CD4-positive, alpha-beta T cell (primary cell): ENCODE measurements at regions of chr7 and their contacts with region 1.

Region 1: DNA sequence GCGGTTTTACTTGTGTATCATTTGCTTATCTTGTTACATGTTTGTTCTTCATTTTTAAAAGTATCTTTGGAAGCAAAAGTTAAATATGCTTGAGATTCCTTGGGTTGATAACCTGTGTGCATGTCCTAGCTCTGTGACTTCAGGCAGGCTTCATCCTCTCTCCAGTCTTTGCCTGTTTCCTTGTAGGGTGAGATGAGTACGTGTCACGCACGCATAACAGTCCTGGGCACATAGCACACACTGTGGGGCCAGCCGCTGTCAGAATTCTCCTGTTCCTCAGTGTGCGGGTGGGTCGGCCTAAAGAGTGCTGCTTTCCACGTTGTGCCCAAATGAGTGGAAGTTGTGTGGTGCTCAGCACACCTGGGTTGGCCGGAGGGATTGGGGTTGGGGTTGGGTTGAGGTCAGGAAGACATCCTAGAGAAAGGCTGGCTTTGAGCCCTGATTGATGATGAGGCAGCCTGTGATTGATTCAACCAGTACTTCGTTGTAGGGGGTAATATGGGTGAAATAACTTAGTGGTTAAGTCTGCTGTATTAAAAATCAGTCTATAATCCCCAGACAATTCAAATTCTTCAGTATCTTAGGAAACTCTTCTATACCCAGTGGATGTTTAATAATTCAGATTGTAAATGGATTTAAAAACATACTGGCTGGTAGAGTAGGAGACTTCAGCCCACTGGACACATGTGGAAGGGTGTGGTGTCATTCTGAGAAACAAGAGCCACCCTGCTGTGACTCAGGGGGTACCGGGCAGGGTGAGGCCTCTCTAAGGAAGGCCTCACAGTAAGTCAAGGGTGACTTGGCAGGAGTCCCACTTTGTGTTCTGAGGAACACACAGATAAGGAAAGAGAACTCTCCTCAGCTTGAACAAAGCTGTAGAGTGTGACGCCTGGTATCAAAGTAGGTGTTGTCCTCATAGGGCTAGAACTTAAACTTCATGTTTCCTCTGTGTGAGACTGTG is 54.8 kb downstream of the DAGLB start:
- DNase-seq: peak in 6 of 14 experiments; percentile 13 to 72 (median 32)
- ATAC-seq: peak; percentile 41
- H3K4me3 ChIP-seq: no peak overlapping the region
- H3K4me3 Mint-ChIP-seq: no peak overlapping the region
- H3K27ac ChIP-seq: peak overlapping the region in 1 of 2 donors; percentile 1
- H3K27ac Mint-ChIP-seq: peak overlapping the region; percentile 75
- H3K4me1 ChIP-seq: peaks cover 25% of the 10 kb centered on the region
- H3K4me1 Mint-ChIP-seq: peaks cover 58% of the 10 kb centered on the region
- H3K27me3 ChIP-seq: no peaks in the 10 kb centered on the region
- H3K27me3 Mint-ChIP-seq: no peaks in the 10 kb centered on the region
- CTCF ChIP-seq: no peak

Region 2: DNA sequence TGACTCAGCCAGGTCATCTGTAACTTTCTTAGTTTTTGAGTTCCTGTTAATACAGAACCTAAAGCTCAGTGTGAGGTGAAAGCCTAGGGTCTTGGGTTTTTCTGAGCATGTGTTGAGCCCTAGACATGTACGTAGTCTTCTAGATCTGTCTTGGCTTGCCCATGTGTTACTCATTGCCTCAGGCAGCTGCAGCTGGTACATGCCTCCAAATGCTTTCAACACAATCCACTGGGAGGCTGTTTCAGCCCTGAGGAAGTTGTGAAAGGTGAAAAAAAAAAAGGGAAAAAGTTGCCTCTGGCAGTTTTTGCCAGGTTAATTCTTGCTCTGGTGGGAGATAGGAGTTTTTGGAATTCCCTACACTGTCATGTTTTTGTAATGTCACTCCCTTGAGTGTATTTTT is 746.1 kb before region 1 on chr7:
- CTCF ChIA-PET with region 1: no interaction called
- POLR2A ChIA-PET with region 1: no interaction called
- intact Hi-C with region 1: no loop called
- DNase-seq: no peak
- ATAC-seq: no peak
- H3K4me3 ChIP-seq: no peak overlapping the region
- H3K4me3 Mint-ChIP-seq: no peak overlapping the region
- H3K27ac ChIP-seq: no peak overlapping the region
- H3K27ac Mint-ChIP-seq: no peak overlapping the region
- H3K4me1 ChIP-seq: peaks cover 30% of the 10 kb centered on the region
- H3K4me1 Mint-ChIP-seq: peaks cover 30% of the 10 kb centered on the region
- H3K27me3 ChIP-seq: no peaks in the 10 kb centered on the region
- H3K27me3 Mint-ChIP-seq: no peaks in the 10 kb centered on the region
- CTCF ChIP-seq: no peak

Region 3: GRCh38 chr7:6032167-6032566 is 360.8 kb before region 1 on chr7:
- CTCF ChIA-PET with region 1: no interaction called
- POLR2A ChIA-PET with region 1: no interaction called
- intact Hi-C with region 1: no loop called
- DNase-seq: peak in 1 of 14 experiments; percentile 49
- ATAC-seq: no peak
- H3K4me3 ChIP-seq: no peak overlapping the region
- H3K4me3 Mint-ChIP-seq: no peak overlapping the region
- H3K27ac ChIP-seq: no peak overlapping the region
- H3K27ac Mint-ChIP-seq: no peak overlapping the region
- H3K4me1 ChIP-seq: peaks cover 4% of the 10 kb centered on the region
- H3K4me1 Mint-ChIP-seq: peaks cover 10% of the 10 kb centered on the region
- H3K27me3 ChIP-seq: no peaks in the 10 kb centered on the region
- H3K27me3 Mint-ChIP-seq: no peaks in the 10 kb centered on the region
- CTCF ChIP-seq: no peak

Region 4: DNA sequence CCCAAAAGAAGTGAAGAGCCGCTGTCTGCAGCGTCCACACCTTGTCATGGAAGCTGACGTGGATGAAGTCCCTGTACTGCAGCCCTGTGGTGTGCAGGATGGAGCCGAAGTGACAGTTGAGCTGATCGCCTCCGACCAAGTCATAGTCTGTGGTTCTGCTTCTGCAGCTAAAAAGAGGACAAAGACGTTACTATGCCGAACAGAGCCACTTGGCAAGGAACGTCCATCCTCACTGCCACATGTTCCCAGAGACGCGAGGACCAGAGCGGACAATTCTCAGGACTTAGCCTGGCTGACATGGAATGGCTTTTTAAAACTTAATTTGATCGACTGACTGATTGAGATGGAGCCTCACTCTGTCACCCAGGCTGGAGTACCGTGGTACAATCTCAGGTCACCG is 33.0 kb after region 1 on chr7:
- CTCF ChIA-PET with region 1: no interaction called
- POLR2A ChIA-PET with region 1: no interaction called
- intact Hi-C with region 1: loop called in 1 of 2 experiments (anchors 5 kb)
- DNase-seq: no peak
- ATAC-seq: no peak
- H3K4me3 ChIP-seq: no peak overlapping the region
- H3K4me3 Mint-ChIP-seq: no peak overlapping the region
- H3K27ac ChIP-seq: no peak overlapping the region
- H3K27ac Mint-ChIP-seq: no peak overlapping the region
- H3K4me1 ChIP-seq: peaks cover 16% of the 10 kb centered on the region
- H3K4me1 Mint-ChIP-seq: peaks cover 17% of the 10 kb centered on the region
- H3K27me3 ChIP-seq: no peaks in the 10 kb centered on the region
- H3K27me3 Mint-ChIP-seq: no peaks in the 10 kb centered on the region
- CTCF ChIP-seq: no peak